ENCODE measurements at regions of chr2 and their contacts with region 1.

Region 1: GRCh38 chr2:39059366-39059952 is 61.4 kb downstream of the SOS1 start:
- DNase-seq: no peak
- H3K4me3 ChIP-seq: no peak overlapping the region
- H3K27ac ChIP-seq: no peak overlapping the region
- H3K4me1 ChIP-seq: no peaks in the 10 kb centered on the region
- H3K27me3 ChIP-seq: no peaks in the 10 kb centered on the region
- CTCF ChIP-seq: peak; percentile 71

Region 2: DNA sequence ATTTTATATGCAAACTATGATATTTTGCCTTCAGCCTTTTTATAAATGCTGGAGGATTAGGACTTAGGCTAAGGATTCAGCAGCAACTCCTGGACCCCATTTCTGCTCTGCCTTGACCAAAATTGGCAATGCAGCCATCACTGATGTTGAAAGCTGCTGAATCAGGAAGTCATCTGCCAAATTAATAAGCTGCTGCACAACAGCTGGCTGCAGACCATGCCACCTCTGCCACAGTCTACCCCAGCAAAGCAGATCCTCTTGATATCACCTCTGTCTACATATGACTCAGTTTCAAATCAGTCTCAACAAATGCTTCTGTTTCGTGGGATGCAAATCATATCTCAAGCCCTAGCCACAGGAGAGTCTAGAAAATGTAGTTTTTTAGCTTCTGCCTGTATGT is 68.5 kb after region 1 on chr2:
- intact Hi-C with region 1: loop called (anchors 5 kb)
- DNase-seq: no peak
- H3K4me3 ChIP-seq: no peak overlapping the region
- H3K27ac ChIP-seq: peak overlapping the region; percentile 35
- H3K4me1 ChIP-seq: no peaks in the 10 kb centered on the region
- H3K27me3 ChIP-seq: no peaks in the 10 kb centered on the region
- CTCF ChIP-seq: no peak

Measured in colonic mucosa (tissue), 4 donors.